Sigmoid colon (tissue), 7 donors: ENCODE measurements at regions of chr2 and their contacts with region 1.

Region 1: GRCh38 chr2:15636972-15637785 is 45.5 kb downstream of the DDX1 start:
- DNase-seq: no peak
- H3K4me3 ChIP-seq: no peak overlapping the region
- H3K27ac ChIP-seq: no peak overlapping the region
- H3K4me1 ChIP-seq: peaks cover 0 to 23% (median 15%) of the 10 kb centered on the region in 4 donors
- H3K27me3 ChIP-seq: no peaks in the 10 kb centered on the region
- CTCF ChIP-seq: peak; percentile 61 to 89 (median 86)
- EP300 ChIP-seq: no peak
- POLR2A ChIP-seq: no peak

Region 2: GRCh38 chr2:15912205-15912604 is 275.0 kb after region 1 on chr2:
- intact Hi-C with region 1: loop called (anchors 10 kb)
- DNase-seq: peak; percentile 83
- H3K4me3 ChIP-seq: no peak overlapping the region
- H3K27ac ChIP-seq: peak overlapping the region in 3 of 4 donors; percentile 5 to 53 (median 33)
- H3K4me1 ChIP-seq: peaks cover 0 to 36% (median 23%) of the 10 kb centered on the region in 4 donors
- H3K27me3 ChIP-seq: no peaks in the 10 kb centered on the region
- CTCF ChIP-seq: no peak
- EP300 ChIP-seq: no peak
- POLR2A ChIP-seq: no peak

Region 3: DNA sequence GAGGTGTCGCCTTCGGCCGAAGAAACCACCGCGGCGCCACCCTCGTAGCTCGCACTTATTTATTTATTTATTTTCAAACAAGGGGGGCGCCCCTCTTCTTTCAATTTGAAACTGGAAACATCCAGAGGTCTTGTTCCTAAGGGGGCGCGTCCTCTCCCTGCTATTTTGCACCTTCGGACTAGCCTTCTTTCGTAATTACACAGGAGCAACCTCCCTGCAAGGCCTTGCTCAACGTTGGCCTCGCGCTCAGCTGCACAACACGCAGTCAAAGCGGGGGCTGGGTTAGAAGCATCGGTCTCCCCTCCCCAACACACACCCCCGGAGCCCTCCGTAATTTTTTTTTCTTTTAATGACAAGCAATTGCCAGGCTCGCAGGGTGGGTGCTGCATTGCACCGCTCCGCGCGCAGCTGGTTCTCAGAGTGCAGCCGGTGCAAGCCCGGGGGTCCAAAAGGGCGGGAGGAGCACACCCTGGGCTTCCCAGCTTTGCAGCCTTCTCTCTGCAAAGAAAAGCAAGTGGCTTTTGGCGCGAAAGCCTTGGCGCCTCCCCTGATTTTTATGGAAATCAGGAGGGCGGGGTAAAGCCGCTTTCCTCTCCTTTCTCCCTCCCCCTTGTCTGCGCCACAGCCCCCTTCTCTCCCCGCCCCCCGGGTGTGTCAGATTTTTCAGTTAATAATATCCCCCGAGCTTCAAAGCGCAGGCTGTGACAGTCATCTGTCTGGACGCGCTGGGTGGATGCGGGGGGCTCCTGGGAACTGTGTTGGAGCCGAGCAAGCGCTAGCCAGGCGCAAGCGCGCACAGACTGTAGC is 302.9 kb after region 1 on chr2 and contains the start of gene MYCN:
- intact Hi-C with region 1: loop called (anchors 5 kb)
- DNase-seq: no peak
- H3K4me3 ChIP-seq: peak within 1 kb of the TSS; percentile 14 to 52 (median 44)
- H3K27ac ChIP-seq: no peak within 1 kb of the TSS
- H3K4me1 ChIP-seq: peaks cover 0 to 48% (median 40%) of the 10 kb centered on the region in 4 donors
- H3K27me3 ChIP-seq: peaks cover 31 to 46% (median 34%) of the 10 kb centered on the region in 3 donors
- CTCF ChIP-seq: peak in 2 of 4 experiments; percentile 5 to 55
- EP300 ChIP-seq: no peak
- POLR2A ChIP-seq: no peak
- total RNA-seq, gene MYCN: 0.33 to 0.71 (median 0.55) TPM

Region 4: GRCh38 chr2:16281451-16282336 is 644.5 kb after region 1 on chr2:
- intact Hi-C with region 1: loop called (anchors 5 kb)
- DNase-seq: no peak
- H3K4me3 ChIP-seq: no peak overlapping the region
- H3K27ac ChIP-seq: no peak overlapping the region
- H3K4me1 ChIP-seq: no peaks in the 10 kb centered on the region
- H3K27me3 ChIP-seq: no peaks in the 10 kb centered on the region
- CTCF ChIP-seq: peak in 2 of 4 experiments; percentile 16 to 45
- EP300 ChIP-seq: no peak
- POLR2A ChIP-seq: no peak

Region 5: GRCh38 chr2:16507655-16508489 is 870.7 kb after region 1 on chr2:
- intact Hi-C with region 1: loop called (anchors 5 kb)
- DNase-seq: no peak
- H3K4me3 ChIP-seq: peak overlapping the region in 3 of 4 donors; percentile 25 to 51 (median 41)
- H3K27ac ChIP-seq: no peak overlapping the region
- H3K4me1 ChIP-seq: peaks cover 0 to 9% (median 9%) of the 10 kb centered on the region in 4 donors
- H3K27me3 ChIP-seq: peaks cover 0 to 24% (median 12%) of the 10 kb centered on the region in 3 donors
- CTCF ChIP-seq: peak in 3 of 4 experiments; percentile 14 to 68 (median 26)
- EP300 ChIP-seq: no peak
- POLR2A ChIP-seq: no peak

Region 6: DNA sequence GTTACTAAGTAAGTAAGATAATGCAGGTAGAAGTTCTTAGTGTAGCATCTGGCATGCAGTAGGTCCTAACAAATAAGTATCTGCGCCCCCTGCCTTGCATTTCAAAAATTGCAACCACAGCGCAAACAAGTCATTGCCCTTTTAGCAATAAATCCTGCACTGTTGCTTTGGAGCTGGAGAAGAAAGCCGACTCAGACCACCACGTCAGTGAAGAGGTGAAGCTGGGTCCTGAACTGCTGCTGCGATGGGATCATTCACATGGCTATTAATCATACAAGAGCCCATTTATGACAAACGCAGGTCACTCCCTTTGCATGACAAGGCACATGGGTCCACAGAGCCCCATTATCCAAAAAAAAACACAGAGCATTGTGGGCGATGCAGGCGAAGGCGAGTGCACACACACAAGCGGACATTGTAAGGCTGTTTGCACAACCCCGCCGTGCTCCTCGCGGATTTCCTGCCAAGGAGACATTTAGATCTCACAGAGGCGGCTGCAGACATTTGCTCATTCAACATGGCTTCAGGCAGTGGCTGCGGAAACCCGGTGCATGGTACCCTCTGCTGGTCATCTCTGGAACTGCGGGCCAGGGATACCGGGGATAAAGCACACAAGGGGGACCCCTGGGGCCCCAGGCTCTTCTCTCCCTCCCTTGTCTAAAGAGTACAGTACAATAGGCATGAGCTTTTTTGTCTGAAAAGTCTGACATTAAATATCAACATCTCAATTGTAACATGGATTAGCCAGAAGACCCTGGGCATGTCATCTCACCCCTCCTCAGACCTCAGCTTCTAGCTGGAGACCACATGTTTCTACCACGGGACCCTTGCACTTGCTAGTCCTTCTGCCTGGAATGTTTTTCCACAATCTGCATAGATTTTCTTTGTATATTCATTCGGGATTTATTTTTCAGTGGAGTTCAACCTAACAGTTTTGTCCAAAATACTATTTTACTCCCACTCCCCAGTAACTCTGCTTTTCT is 971.8 kb after region 1 on chr2:
- intact Hi-C with region 1: loop called (anchors 2 kb)
- DNase-seq: peak; percentile 89
- H3K4me3 ChIP-seq: peak overlapping the region in 3 of 4 donors; percentile 35 to 39 (median 38)
- H3K27ac ChIP-seq: peak overlapping the region in 2 of 4 donors; percentile 20 to 26
- H3K4me1 ChIP-seq: peaks cover 0 to 9% (median 2%) of the 10 kb centered on the region in 4 donors
- H3K27me3 ChIP-seq: no peaks in the 10 kb centered on the region
- CTCF ChIP-seq: peak; percentile 64 to 95 (median 86)
- EP300 ChIP-seq: no peak
- POLR2A ChIP-seq: no peak